ENCODE measurements at regions of chr14 and their contacts with region 1.

Region 1: GRCh38 chr14:101707068-101707842 is 54.3 kb upstream of the PPP2R5C start:
- DNase-seq: peak; percentile 89
- ATAC-seq: peak; percentile 55
- H3K4me3 ChIP-seq: 0 out of 2 replicates have a peak overlapping the region, but pooled peaks have one; percentile 25
- H3K27ac ChIP-seq: peak overlapping the region; percentile 21
- H3K4me1 ChIP-seq: peaks cover 22% of the 10 kb centered on the region
- H3K27me3 ChIP-seq: no peaks in the 10 kb centered on the region
- CTCF ChIP-seq: peak; percentile 88

Region 2: GRCh38 chr14:101889898-101890297 is 182.6 kb after region 1 on chr14:
- CTCF ChIA-PET with region 1: no interaction called
- POLR2A ChIA-PET with region 1: no interaction called
- intact Hi-C with region 1: loop called (anchors 10 kb)
- DNase-seq: peak; percentile 27
- ATAC-seq: peak; percentile 51
- H3K4me3 ChIP-seq: no peak overlapping the region
- H3K27ac ChIP-seq: no peak overlapping the region
- H3K4me1 ChIP-seq: no peaks in the 10 kb centered on the region
- H3K27me3 ChIP-seq: no peaks in the 10 kb centered on the region
- CTCF ChIP-seq: peak; percentile 47

Measured in PC-3 (cell line).